ENCODE measurements at regions of chr22 and their contacts with region 1.

Region 1: DNA sequence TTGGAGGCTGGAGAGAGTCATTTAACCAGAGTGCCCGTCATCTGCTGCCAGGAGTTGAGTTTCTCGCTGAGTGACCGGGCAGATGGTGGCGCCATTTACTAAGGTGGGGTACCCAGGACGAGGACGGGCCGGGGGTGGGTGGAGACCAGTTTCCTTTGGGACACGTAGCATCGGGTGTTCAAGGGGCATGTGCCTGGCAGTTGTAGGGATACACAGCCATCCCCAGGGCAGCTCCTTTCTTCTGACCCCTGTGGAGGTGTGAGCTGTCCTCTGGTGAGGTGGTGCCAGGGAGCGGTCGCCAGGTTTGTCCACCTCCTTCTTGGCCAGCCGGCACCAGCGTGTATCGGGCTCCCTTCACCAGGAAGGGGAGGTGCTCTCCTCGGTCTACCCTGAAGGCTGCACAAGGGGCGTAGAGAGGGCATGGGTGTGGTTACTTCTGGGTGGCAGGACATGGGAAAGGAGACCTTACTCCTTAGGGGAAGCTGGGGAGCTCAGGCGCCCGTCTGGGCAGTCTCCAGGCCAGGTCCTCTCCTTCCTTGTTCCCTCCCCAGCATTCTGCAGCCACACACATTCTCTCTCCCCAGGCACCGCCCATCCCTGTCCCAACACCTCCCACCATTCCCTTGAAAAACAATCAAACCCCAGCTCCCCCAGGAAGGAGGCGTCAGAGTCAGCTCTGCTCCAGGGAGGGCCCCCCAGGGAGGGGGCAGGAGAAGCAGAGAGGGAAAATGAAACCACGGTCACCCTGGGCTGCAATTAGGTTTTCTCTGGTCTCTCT is 10.3 kb upstream of the MB start:
- DNase-seq: peak; percentile 79
- ATAC-seq: peak; percentile 68
- H3K4me3 ChIP-seq: peak overlapping the region; percentile 63
- H3K27ac ChIP-seq: peak overlapping the region; percentile 98
- H3K4me1 ChIP-seq: peaks cover 34% of the 10 kb centered on the region
- H3K27me3 ChIP-seq: no peaks in the 10 kb centered on the region
- CTCF ChIP-seq: peak; percentile 70

Region 2: DNA sequence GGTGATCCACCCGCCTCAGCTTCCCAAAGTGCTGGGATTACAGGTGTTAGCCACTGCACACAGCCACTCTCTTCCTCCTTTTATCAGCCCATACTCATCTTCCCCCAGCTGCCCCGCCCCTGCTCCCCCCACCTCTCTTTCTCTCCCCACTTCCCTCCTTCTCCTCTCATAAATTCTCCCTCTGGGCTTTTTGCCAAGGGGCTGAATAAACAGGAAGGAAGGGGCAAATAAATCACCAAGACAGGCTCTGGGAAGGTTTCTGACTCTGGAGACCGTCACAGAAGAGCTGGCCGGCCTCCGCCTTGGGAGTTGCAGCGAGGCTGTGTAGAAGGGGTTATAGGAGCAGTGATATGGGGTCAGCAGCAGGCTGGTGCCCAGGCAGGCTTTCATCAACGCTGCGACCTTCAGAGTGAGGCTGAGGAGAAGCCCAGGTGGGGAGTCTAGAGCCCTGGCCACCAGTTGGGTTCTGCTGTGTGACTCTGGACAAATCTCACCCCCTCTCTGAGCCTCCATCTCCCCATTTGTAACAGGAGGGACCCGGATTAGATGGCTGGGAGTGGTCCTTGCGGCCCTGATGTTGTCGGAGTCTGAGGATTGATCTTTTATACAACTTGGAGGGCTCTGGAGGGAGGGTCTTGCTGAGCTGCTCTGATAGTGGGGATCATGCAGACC is 149.4 kb before region 1 on chr22:
- CTCF ChIA-PET with region 1: no interaction called
- POLR2A ChIA-PET with region 1: interaction called, 14 read pairs
- intact Hi-C with region 1: no loop called
- DNase-seq: peak; percentile 96
- ATAC-seq: peak; percentile 83
- H3K4me3 ChIP-seq: no peak overlapping the region
- H3K27ac ChIP-seq: 0 out of 2 replicates have a peak overlapping the region, but pooled peaks have one; percentile 21
- H3K4me1 ChIP-seq: peaks cover 36% of the 10 kb centered on the region
- H3K27me3 ChIP-seq: no peaks in the 10 kb centered on the region
- CTCF ChIP-seq: no peak

Region 3: DNA sequence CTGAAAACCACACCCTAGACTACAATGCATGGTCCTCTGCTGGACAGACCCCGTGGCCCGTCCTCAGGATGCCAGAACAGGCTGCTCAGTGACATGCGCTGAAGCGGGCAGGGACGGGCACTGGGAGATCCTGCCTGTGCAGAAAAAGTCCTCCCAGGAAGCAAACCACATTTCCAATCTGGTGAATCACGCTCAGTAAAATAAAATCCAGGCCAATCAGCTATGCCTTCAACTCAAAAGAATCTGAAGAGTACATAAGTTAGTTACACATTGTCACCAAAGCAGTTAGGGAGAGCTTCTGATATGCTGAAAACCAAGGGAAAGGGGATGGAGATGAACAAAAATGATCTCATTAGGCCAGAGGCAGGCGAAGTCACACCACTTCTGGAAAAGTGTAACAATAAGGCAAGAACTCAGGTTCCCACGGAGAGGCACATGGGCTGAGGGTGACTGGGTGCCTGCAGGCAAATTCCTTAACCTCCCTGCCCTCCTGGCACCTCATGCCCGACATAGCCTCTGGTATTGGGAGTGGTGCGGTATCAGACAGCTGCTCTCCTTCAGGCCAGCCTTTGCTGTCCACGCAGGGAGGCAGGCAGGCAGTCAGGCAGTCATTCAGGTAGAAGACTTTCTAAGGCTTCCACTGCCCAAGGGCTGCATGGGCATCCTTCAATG is 156.6 kb after region 1 on chr22:
- CTCF ChIA-PET with region 1: no interaction called
- POLR2A ChIA-PET with region 1: no interaction called
- intact Hi-C with region 1: loop called (anchors 5 kb)
- DNase-seq: peak; percentile 89
- ATAC-seq: peak; percentile 94
- H3K4me3 ChIP-seq: peak overlapping the region; percentile 31; the same call in 1 of the 2 replicates
- H3K27ac ChIP-seq: peak overlapping the region; percentile 92
- H3K4me1 ChIP-seq: peaks cover 29% of the 10 kb centered on the region
- H3K27me3 ChIP-seq: no peaks in the 10 kb centered on the region
- CTCF ChIP-seq: no peak

Region 4: DNA sequence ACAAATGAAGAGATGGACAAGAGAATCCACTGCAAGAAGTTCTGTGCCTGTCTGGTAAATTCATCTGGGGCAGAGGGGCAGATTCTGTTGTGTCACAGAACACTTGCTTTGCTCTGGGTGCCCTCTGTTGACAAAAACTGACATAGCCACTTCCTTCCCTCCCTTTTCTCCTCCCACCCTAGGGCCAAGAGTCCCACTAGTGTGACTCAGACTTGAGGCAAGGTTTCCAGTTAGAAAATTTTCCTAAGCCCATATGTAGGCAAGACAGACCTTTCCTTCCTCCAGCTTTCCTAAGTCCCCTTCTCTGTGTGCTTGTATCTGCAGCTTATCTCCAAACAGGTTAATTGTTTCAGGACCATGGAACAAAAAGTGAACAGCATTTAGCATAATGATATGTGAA is 294.3 kb after region 1 on chr22:
- CTCF ChIA-PET with region 1: no interaction called
- POLR2A ChIA-PET with region 1: interaction called, 5 read pairs
- intact Hi-C with region 1: loop called (anchors 1 kb)
- DNase-seq: peak; percentile 84
- ATAC-seq: peak; percentile 98
- H3K4me3 ChIP-seq: no peak overlapping the region
- H3K27ac ChIP-seq: peak overlapping the region; percentile 11; the same call in 1 of the 2 replicates
- H3K4me1 ChIP-seq: peaks cover 13% of the 10 kb centered on the region
- H3K27me3 ChIP-seq: no peaks in the 10 kb centered on the region
- CTCF ChIP-seq: peak; percentile 71

Region 5: DNA sequence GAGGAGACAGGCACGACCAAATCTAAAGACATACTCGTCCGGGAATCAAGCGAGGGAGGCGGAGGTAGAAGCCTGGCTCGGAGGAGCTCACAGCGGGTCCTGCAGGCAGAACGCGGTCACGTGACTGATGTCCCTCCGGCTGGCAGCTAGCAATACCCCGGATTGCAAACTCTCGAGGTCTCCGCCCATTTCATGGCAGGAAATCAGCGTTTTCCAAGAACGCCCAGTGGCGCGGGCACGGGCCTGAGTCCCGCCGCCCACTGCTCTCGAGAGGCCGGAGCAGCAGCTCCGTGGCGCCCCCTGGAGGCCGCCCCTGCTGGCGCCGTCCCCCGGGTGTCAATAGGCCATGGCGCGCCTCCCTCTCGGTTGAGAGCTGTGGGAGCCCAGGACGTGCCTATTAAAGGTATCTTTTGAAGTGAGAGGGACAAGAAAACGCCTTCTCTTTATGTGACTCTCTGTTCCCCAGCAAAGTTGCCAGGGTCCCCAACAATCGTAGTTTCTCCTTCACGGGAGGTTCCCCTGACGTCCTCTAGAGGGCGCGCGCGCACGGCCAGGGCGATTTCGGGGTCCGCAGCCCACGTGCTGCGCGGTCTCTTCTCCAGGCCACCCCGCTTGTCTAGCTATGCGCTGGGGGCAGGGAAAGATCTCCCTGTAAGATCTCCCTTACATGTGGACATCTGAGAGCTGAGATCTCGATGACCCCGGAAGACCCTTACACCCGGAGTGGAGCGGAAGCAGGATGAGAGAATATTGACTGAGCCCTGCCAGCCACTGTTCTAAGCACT is 438.5 kb after region 1 on chr22:
- CTCF ChIA-PET with region 1: interaction called, 3 read pairs
- POLR2A ChIA-PET with region 1: no interaction called
- intact Hi-C with region 1: loop called (anchors 1 kb)
- DNase-seq: peak; percentile 90
- ATAC-seq: peak; percentile 85
- H3K4me3 ChIP-seq: peak overlapping the region; percentile 78
- H3K27ac ChIP-seq: no peak overlapping the region
- H3K4me1 ChIP-seq: peaks cover 6% of the 10 kb centered on the region
- H3K27me3 ChIP-seq: no peaks in the 10 kb centered on the region
- CTCF ChIP-seq: peak; percentile 99